Naive thymus-derived CD8-positive, alpha-beta T cell (primary cell): ENCODE measurements at regions of chr16 and their contacts with region 1.

Region 1: DNA sequence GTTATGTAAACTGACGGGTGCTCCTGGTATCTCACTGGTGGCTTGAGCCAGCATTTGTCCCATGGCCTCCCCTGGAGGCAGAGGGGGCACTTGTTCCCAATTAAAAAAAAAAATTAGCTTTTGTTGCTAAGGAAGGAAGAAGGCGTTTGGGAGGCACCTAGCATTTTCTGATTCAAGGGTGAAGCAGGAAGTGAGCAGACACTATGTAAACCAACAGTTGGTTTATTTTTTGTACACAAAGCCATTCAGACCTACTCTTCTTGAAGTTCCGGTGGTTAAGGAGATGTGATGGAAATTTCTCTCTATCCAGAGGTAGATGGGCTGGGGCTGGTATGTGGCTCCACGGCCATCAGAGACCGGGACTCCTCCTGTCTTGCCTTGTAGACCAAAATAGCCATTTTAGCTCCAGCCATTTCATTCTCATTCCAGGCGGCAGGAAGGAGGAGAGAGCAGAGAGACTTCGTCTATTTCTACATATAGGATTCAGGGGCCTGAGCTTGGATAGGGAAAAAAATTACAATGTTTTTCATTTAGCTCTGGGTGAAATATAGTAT is 103.0 kb downstream of the SNX29 start:
- DNase-seq: peak in 3 of 10 donors; percentile 39 to 53 (median 40)
- ATAC-seq: peak; percentile 26 to 29
- H3K4me3 Mint-ChIP-seq: peak overlapping the region; percentile 58 to 81 (median 78)
- H3K27ac Mint-ChIP-seq: peak overlapping the region; percentile 89 to 100 (median 98)
- H3K4me1 Mint-ChIP-seq: peaks cover 34 to 86% (median 82%) of the 10 kb centered on the region in 4 donors
- H3K27me3 Mint-ChIP-seq: no peaks in the 10 kb centered on the region

Region 2: DNA sequence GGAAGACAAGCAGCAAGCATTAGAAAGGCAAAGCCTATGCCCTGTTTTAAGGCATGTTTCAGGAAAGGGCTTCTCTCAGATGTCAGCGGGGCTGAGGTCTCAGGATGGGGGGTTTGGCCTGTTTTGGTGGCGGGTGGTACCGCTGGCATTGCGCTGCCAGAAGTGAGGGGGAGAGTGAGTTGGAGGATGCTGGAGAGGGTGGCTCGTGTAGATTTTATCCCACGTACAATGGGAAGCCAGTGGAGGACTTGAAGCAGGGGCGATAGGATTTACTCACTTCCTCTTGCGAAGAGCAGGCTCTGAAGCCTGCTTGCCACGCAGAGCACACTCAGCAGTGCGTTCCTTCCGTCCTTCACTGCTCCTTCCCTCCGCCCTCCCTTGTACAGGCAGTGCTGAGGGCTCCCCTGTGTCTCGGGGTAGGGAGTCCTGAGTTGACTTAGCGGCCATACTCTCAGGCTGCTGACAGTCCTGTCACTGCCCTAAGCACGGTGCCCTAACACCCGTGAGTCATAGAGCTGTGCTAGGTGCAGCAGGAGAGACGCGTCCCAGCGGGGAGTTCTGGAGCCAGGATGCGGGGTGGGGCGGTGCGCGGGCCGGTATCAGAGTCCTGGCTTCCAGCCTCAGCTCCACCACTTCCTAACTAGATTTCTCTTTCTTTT is 10.1 kb after region 1 on chr16:
- POLR2A ChIA-PET with region 1: interaction called, 25 read pairs
- DNase-seq: peak in 7 of 10 donors; percentile 14 to 74 (median 42)
- ATAC-seq: peak; percentile 86 to 87
- H3K4me3 Mint-ChIP-seq: peak overlapping the region; percentile 80 to 98 (median 90)
- H3K27ac Mint-ChIP-seq: peak overlapping the region; percentile 93 to 100 (median 98)
- H3K4me1 Mint-ChIP-seq: peaks cover 23 to 53% (median 48%) of the 10 kb centered on the region in 4 donors
- H3K27me3 Mint-ChIP-seq: no peaks in the 10 kb centered on the region

Region 3: DNA sequence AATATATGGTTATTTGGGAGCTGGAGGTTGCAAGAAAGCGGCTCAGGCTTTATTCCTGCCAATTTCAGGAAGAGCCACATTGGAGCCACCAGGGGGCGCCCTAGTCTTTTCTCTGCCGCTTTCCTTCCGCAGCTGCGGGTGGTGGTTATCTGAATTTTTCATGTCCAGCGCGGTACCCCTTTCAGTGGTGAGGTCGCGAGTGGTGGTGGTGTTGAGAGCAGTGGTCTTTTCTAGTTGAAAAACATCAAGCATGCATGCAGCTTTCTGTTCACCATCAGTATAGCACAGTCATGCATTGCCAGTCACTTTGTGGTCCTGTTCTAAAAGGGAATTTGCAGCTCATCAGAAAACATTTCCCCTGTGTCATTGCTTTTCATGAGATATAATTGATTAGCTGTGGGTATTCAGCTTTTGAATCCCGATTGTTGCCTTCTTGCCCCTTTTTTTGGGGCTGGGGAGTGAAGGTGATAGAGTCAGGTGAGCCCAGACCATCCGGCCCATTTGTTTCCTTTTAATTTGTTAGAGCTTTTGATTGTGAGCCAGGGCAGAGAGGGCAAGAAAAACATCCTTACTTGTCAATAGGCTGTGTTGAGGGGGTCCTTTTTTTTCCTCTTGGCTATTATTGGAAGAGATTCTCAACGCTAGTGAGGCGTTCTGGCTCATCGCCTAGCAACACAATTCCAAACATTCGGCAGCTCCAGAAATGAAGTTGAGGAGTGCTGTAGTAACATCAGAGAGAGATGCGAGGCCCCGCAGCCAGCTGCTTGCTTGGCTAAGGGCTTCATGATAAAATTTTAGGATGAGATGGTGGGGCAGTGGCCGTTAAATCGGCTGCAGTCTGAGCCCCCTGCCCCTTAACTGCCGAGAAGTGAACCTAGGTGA is 16.0 kb after region 1 on chr16:
- POLR2A ChIA-PET with region 1: interaction called, 25 read pairs
- DNase-seq: peak; percentile 31 to 77 (median 60)
- ATAC-seq: peak in 1 of 2 donors; percentile 56
- H3K4me3 Mint-ChIP-seq: peak overlapping the region; percentile 75 to 89 (median 80)
- H3K27ac Mint-ChIP-seq: peak overlapping the region in 8 of 10 donors; percentile 20 to 90 (median 75)
- H3K4me1 Mint-ChIP-seq: peaks cover 19 to 55% (median 37%) of the 10 kb centered on the region in 4 donors
- H3K27me3 Mint-ChIP-seq: no peaks in the 10 kb centered on the region

Region 4: GRCh38 chr16:12120217-12120981 is 40.9 kb after region 1 on chr16:
- POLR2A ChIA-PET with region 1: no interaction called
- DNase-seq: no peak
- ATAC-seq: no peak
- H3K4me3 Mint-ChIP-seq: no peak overlapping the region
- H3K27ac Mint-ChIP-seq: peak overlapping the region in 3 of 10 donors; percentile 48 to 69 (median 63)
- H3K4me1 Mint-ChIP-seq: peaks cover 12 to 38% (median 23%) of the 10 kb centered on the region in 4 donors
- H3K27me3 Mint-ChIP-seq: no peaks in the 10 kb centered on the region